Activated CD4-positive, alpha-beta T cell treated with anti-CD3 and anti-CD28 coated beads, Interleukin-2, amount 10 ng/mL, durations not matched to agents 24 days and 14 days (primary cell): ENCODE measurements at regions of chr3 and their contacts with region 1.

Region 1: GRCh38 chr3:114332342-114333179 is 38.7 kb downstream of the TIGIT start:
- DNase-seq: no peak
- H3K4me3 Mint-ChIP-seq: no peak overlapping the region
- H3K27ac Mint-ChIP-seq: peak overlapping the region; percentile 89
- H3K4me1 Mint-ChIP-seq: peaks cover 42% of the 10 kb centered on the region
- H3K27me3 Mint-ChIP-seq: no peaks in the 10 kb centered on the region

Region 2: GRCh38 chr3:114043205-114043604 is 289.4 kb before region 1 on chr3:
- intact Hi-C with region 1: no loop called
- DNase-seq: no peak
- H3K4me3 Mint-ChIP-seq: no peak overlapping the region
- H3K27ac Mint-ChIP-seq: no peak overlapping the region
- H3K4me1 Mint-ChIP-seq: no peaks in the 10 kb centered on the region
- H3K27me3 Mint-ChIP-seq: peaks cover 8% of the 10 kb centered on the region

Region 3: DNA sequence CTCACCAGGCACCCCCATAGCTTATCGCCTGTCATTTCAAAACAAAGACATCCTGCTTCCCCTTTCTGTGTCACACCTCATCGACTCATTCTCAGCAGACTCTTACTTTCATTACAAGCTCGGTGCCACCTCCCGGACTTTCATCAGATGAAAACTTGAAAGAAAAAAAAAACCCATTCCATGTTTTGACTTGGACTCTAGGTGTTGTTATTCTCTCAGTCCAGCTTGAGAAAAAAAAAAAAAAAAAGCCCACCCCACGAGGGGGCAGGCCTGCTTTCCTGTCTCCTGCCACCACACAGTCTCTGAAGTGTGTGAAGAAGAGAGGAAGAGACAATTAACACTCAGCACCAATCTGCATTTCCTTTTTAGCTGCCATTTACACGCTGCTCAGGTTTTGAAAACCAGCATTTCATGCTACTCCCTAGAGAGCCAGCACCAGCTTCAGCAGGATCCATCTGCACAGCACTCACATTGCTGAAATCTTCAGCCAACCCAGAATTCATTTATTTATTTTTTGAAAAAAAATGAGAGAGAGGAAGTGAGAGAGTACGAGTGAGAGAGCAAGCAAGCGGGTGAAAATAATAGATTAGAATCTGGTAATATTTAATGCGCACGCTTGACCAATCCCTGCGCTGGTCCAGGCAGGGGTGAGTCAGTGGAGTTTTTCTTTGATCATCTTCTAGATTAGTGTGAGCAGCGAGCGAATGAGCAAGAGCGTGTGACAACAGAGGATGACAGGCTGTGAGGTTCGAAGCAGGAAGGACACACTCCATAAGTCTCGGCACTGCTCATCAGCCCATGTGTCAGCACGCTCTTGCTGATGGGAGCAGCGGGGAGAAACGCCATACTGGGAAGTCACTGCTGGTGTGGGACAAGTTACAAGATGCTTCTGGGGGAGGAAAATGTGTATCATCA is 118.7 kb before region 1 on chr3:
- intact Hi-C with region 1: loop called (anchors 2 kb)
- DNase-seq: peak; percentile 89
- H3K4me3 Mint-ChIP-seq: no peak overlapping the region
- H3K27ac Mint-ChIP-seq: no peak overlapping the region
- H3K4me1 Mint-ChIP-seq: peaks cover 23% of the 10 kb centered on the region
- H3K27me3 Mint-ChIP-seq: no peaks in the 10 kb centered on the region

Region 4: DNA sequence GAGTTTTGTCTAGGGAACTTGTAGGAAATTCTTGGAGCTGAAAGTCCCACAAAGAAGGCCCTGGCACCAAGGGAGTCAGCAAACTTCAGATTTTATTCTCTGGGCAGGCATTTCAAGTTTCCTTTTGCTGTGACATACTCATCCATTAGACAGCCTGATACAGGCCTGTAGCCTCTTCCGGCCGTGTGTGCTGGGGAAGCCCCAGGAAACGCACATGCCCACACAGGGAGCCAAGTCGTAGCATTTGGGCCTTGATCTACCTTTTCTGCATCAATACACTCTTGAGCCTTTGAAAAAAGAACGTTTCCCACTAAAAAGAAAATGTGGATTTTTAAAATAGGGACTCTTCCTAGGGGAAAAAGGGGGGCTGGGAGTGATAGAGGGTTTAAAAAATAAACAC is 23.7 kb before region 1 on chr3:
- intact Hi-C with region 1: loop called (anchors 1 kb)
- DNase-seq: peak; percentile 79
- H3K4me3 Mint-ChIP-seq: peak overlapping the region; percentile 49
- H3K27ac Mint-ChIP-seq: peak overlapping the region; percentile 92
- H3K4me1 Mint-ChIP-seq: peaks cover 33% of the 10 kb centered on the region
- H3K27me3 Mint-ChIP-seq: no peaks in the 10 kb centered on the region

Region 5: GRCh38 chr3:114319453-114319852 is 13.1 kb before region 1 on chr3:
- intact Hi-C with region 1: loop called (anchors 1 kb)
- DNase-seq: no peak
- H3K4me3 Mint-ChIP-seq: no peak overlapping the region
- H3K27ac Mint-ChIP-seq: no peak overlapping the region
- H3K4me1 Mint-ChIP-seq: peaks cover 44% of the 10 kb centered on the region
- H3K27me3 Mint-ChIP-seq: no peaks in the 10 kb centered on the region